Heart left ventricle (tissue), 16 donors: ENCODE measurements at regions of chr16 and their contacts with region 1.

Region 1: GRCh38 chr16:75622761-75623605 is at the start of gene ADAT1:
- DNase-seq: peak; percentile 98 to 99 (median 99)
- ATAC-seq: peak; percentile 96 to 97 (median 97)
- H3K4me3 ChIP-seq: peak within 1 kb of the TSS; percentile 57 to 89 (median 72)
- H3K27ac ChIP-seq: peak within 1 kb of the TSS; percentile 74 to 96 (median 92)
- H3K4me1 ChIP-seq: peaks cover 0 to 43% (median 19%) of the 10 kb centered on the region in 12 donors
- H3K27me3 ChIP-seq: no peaks in the 10 kb centered on the region
- CTCF ChIP-seq: no peak
- POLR2A ChIP-seq: peak in 1 of 2 donors; percentile 92
- total RNA-seq, gene ADAT1: 16.8 to 37.5 (median 24.1) TPM

Region 2: GRCh38 chr16:75464130-75464918 is 158.7 kb before region 1 on chr16 and contains the start of gene TMEM170A:
- intact Hi-C with region 1: loop called in 2 of 10 experiments (anchors 10 kb)
- DNase-seq: peak; percentile 99 to 100 (median 100)
- ATAC-seq: peak; percentile 97 to 99 (median 98)
- H3K4me3 ChIP-seq: peak within 1 kb of the TSS; percentile 67 to 100 (median 90)
- H3K27ac ChIP-seq: peak within 1 kb of the TSS; percentile 84 to 100 (median 96)
- H3K4me1 ChIP-seq: peaks cover 0 to 39% (median 13%) of the 10 kb centered on the region in 12 donors
- H3K27me3 ChIP-seq: no peaks in the 10 kb centered on the region
- CTCF ChIP-seq: peak in 11 of 12 donors; percentile 100
- POLR2A ChIP-seq: peak; percentile 73 to 97
- total RNA-seq, gene TMEM170A: 7.7 to 14.6 (median 9.5) TPM

Region 3: GRCh38 chr16:75527825-75528299 is 95.1 kb before region 1 on chr16:
- intact Hi-C with region 1: no loop called
- DNase-seq: no peak
- ATAC-seq: no peak
- H3K4me3 ChIP-seq: no peak overlapping the region
- H3K27ac ChIP-seq: no peak overlapping the region
- H3K4me1 ChIP-seq: no peaks in the 10 kb centered on the region
- H3K27me3 ChIP-seq: no peaks in the 10 kb centered on the region
- CTCF ChIP-seq: no peak
- POLR2A ChIP-seq: no peak

Region 4: DNA sequence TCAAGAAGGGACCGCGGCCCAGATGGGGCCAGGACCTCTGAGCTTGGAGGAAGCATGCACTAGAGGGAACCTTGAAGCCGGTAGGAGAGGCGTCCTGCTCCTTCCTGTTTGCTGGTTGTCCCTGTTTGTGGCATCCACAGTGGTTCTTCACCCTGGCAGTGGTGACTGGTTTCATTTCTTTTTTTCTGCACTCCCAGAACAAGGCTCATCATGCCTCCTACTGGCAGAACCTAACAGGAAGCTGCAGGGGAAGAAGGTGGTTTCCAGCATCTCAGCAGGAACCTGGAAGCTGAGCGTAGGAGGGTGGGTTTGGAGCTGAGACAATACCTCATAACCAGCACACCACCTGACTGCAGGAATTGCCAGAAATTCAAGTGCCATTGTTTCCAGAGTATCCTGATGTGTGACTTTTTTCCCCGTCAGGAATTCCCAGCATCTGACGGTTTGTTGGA is 72.7 kb before region 1 on chr16:
- intact Hi-C with region 1: loop called in 3 of 10 experiments (anchors 2 to 10 kb)
- DNase-seq: peak in 4 of 5 donors; percentile 51 to 76 (median 73)
- ATAC-seq: peak; percentile 54 to 89 (median 64)
- H3K4me3 ChIP-seq: peak overlapping the region in 5 of 12 donors; percentile 5 to 32 (median 23)
- H3K27ac ChIP-seq: peak overlapping the region in 10 of 12 donors; percentile 50 to 81 (median 70)
- H3K4me1 ChIP-seq: peaks cover 0 to 35% (median 9%) of the 10 kb centered on the region in 12 donors
- H3K27me3 ChIP-seq: no peaks in the 10 kb centered on the region
- CTCF ChIP-seq: peak; percentile 14 to 68 (median 48)
- POLR2A ChIP-seq: no peak

Region 5: DNA sequence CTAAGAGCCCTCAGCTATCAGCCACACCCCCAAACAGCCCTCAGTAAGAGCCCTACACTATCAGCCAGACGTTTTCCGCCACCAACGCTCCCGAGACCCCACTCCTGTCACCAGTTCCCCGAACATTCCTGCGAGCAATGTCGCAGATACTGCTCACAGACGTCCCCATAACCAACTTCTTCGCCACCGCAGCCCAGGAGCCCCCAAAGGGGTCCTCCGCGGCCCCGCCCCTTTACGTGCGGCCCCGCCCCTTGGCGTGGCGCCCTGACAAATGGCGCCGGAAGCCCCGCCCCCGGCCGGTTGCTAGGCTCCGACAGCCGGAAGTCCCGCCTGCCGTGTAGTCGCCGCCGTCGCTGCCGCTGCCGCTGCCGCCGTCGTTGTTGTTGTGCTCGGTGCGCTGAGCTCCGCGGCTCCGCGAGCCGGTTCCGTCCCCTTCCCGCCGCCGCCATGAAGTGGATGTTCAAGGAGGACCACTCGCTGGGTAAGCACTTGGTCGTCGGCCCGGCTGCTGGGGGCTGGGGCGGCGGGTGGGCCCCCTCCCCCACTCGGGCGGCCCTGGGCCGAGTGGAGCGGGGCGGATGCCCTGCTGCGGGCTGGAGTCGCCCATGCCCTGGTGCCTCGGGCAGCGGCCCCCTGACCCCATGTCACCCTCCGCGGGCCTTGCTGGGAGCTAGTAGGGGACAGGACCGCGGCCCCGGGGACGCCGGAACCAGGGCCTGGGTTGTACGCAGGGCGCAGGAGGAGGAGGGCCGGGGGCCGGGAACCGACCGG is 56.8 kb before region 1 on chr16 and contains the start of gene GABARAPL2:
- intact Hi-C with region 1: loop called in 6 of 10 experiments (anchors 5 to 10 kb)
- DNase-seq: peak; percentile 83 to 95 (median 87)
- ATAC-seq: peak; percentile 74 to 94 (median 93)
- H3K4me3 ChIP-seq: peak within 1 kb of the TSS; percentile 72 to 100 (median 92)
- H3K27ac ChIP-seq: peak within 1 kb of the TSS; percentile 59 to 95 (median 84)
- H3K4me1 ChIP-seq: peaks cover 3 to 55% (median 48%) of the 10 kb centered on the region in 12 donors
- H3K27me3 ChIP-seq: no peaks in the 10 kb centered on the region
- CTCF ChIP-seq: no peak
- POLR2A ChIP-seq: peak; percentile 77 to 90
- total RNA-seq, gene GABARAPL2: 145 to 256 (median 210) TPM

Region 6: GRCh38 chr16:75647492-75648264 is 24.7 kb after region 1 on chr16 and contains the starts of genes KARS1 and TERF2IP:
- intact Hi-C with region 1: loop called in 4 of 10 experiments (anchors 1 to 2 kb)
- DNase-seq: peak; percentile 93 to 95 (median 94)
- ATAC-seq: peak; percentile 96 to 98 (median 98)
- H3K4me3 ChIP-seq: peak within 1 kb of the TSS; percentile 85 to 99 (median 95)
- H3K27ac ChIP-seq: peak within 1 kb of the TSS; percentile 93 to 99 (median 97)
- H3K4me1 ChIP-seq: peaks cover 21 to 65% (median 48%) of the 10 kb centered on the region in 12 donors
- H3K27me3 ChIP-seq: no peaks in the 10 kb centered on the region
- CTCF ChIP-seq: no peak
- POLR2A ChIP-seq: peak; percentile 79 to 97
- total RNA-seq, gene KARS1: 111 to 152 (median 129) TPM
- total RNA-seq, gene TERF2IP: 57.0 to 76.7 (median 73.1) TPM